Activated CD4-positive, alpha-beta T cell treated with anti-CD3 and anti-CD28 coated beads, Interleukin-2, amount 10 ng/mL, durations not matched to agents 24 days and 14 days (primary cell): ENCODE measurements at regions of chr13 and their contacts with region 1.

Region 1: DNA sequence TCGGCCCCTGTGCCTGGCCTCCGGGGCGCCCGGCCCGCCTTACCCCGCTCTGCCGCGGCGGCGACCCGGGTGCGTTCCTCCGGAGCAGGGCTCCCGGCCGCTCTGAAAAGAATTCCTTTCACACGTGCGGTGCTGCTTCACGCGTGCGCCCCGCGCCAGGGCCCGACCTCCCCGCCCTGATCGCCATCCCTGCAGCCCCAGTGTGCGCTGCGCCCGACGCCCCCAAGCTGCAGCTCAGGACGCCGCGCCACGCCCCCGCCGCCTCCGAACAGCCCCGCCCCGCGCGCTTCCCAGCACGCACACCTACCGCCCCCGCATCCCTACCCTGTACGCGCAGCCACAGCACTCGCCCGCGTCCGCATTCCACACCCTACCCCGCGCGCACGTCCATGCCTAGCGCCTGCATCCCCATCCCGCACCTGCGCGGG is at the start of gene GJA3:
- DNase-seq: peak; percentile 86
- H3K4me3 Mint-ChIP-seq: peak within 1 kb of the TSS; percentile 86
- H3K27ac Mint-ChIP-seq: peak within 1 kb of the TSS; percentile 79
- H3K4me1 Mint-ChIP-seq: peaks cover 18% of the 10 kb centered on the region
- H3K27me3 Mint-ChIP-seq: peaks cover 56% of the 10 kb centered on the region
- total RNA-seq, gene GJA3: 0.02 TPM in 1 of 2 replicates, not detected in the other

Region 2: GRCh38 chr13:19782049-19782726 is 378.7 kb before region 1 on chr13:
- intact Hi-C with region 1: loop called (anchors 1 kb)
- DNase-seq: peak; percentile 91
- H3K4me3 Mint-ChIP-seq: peak overlapping the region; percentile 96
- H3K27ac Mint-ChIP-seq: peak overlapping the region; percentile 99
- H3K4me1 Mint-ChIP-seq: peaks cover 6% of the 10 kb centered on the region
- H3K27me3 Mint-ChIP-seq: peaks cover 2% of the 10 kb centered on the region

Region 3: DNA sequence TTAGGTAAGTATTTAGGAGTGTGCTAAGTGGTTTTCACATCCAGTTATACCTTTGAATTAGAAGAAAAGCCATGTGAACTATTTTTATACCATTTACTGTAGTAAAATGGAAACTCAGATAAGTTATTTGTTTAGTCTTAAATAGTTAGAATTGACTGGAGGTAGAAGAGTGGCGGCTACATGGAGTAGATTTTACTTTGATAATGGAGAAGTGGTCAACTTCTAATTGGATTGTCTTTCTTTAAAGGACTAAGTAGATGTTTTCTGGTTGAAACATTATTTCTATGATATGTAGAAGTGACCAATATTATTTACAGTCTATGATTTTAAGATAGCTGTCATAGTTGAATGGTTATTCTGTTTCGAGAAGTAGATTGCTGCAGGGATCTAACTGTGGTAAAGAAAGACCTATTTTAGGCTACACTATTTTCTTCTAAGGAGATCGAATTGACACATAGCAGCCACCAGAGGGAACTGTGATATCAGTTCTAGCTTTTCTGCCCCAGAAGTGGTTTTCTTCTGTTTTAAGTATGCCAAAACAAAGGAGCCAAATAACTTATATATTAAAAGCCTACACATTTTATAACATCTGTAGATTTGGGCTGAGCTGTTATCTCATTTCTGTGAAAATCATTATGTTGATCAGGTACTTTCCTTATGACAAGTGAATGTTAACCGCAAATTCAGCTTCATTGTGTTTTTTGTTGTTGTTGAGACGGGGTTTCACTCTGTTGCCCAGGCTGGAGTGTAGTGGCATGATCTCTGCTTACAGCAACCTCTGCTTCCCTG is 176.2 kb before region 1 on chr13:
- intact Hi-C with region 1: loop called (anchors 1 kb)
- DNase-seq: no peak
- H3K4me3 Mint-ChIP-seq: no peak overlapping the region
- H3K27ac Mint-ChIP-seq: no peak overlapping the region
- H3K4me1 Mint-ChIP-seq: peaks cover 21% of the 10 kb centered on the region
- H3K27me3 Mint-ChIP-seq: no peaks in the 10 kb centered on the region

Region 4: GRCh38 chr13:20090349-20090748 is 70.5 kb before region 1 on chr13:
- intact Hi-C with region 1: loop called (anchors 5 kb)
- DNase-seq: no peak
- H3K4me3 Mint-ChIP-seq: no peak overlapping the region
- H3K27ac Mint-ChIP-seq: no peak overlapping the region
- H3K4me1 Mint-ChIP-seq: no peaks in the 10 kb centered on the region
- H3K27me3 Mint-ChIP-seq: peaks cover 3% of the 10 kb centered on the region

Region 5: GRCh38 chr13:20101484-20102316 is 59.2 kb before region 1 on chr13:
- intact Hi-C with region 1: no loop called
- DNase-seq: peak; percentile 50
- H3K4me3 Mint-ChIP-seq: no peak overlapping the region
- H3K27ac Mint-ChIP-seq: no peak overlapping the region
- H3K4me1 Mint-ChIP-seq: no peaks in the 10 kb centered on the region
- H3K27me3 Mint-ChIP-seq: peaks cover 59% of the 10 kb centered on the region

Region 6: DNA sequence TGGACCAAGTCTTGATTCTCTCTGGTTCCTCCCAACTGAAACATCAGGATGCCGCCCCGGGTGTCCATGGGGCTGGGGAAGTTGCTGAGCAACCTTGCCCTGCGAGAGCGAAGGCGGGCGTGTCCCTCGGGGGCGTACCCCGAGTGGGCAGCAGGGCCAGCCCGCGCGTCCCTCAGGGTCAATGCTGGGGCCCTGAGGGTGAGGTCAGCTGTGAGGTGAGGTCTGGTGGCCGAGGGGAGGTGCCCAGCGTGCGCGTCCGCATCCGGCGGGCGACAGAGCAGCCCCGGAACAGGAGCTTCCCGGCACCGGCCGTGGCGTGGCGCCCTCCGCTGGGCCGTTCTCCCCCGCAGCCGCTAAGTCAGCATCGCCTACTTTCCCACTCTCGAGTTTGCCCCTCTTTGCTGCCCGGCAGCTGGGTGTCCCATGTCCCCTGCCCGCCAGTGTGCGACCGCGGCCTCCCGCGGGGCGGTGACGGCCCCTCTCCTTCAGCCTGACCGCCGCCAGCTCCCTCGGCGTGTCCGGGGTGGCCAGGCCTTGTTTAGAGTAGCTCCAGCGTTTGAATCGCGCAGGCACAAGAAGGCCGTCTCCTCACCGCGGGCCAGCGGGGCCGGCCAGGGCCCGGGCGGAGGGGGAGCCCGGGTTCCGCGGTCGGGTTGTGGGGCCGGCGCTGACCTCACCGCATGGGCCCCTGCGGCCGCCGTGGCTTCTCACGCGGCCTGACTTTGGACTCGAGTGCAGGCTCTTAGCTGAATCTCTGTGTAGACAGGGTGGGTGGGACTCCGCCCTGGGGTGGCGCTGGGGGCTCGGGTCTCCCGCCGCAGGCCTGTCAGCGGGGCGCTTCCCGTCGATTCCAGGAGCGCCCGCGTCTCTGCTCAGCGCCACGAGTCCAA is 33.0 kb before region 1 on chr13:
- intact Hi-C with region 1: loop called (anchors 2 kb)
- DNase-seq: peak; percentile 81
- H3K4me3 Mint-ChIP-seq: peak overlapping the region; percentile 60
- H3K27ac Mint-ChIP-seq: no peak overlapping the region
- H3K4me1 Mint-ChIP-seq: peaks cover 2% of the 10 kb centered on the region
- H3K27me3 Mint-ChIP-seq: peaks cover 35% of the 10 kb centered on the region

Region 7: DNA sequence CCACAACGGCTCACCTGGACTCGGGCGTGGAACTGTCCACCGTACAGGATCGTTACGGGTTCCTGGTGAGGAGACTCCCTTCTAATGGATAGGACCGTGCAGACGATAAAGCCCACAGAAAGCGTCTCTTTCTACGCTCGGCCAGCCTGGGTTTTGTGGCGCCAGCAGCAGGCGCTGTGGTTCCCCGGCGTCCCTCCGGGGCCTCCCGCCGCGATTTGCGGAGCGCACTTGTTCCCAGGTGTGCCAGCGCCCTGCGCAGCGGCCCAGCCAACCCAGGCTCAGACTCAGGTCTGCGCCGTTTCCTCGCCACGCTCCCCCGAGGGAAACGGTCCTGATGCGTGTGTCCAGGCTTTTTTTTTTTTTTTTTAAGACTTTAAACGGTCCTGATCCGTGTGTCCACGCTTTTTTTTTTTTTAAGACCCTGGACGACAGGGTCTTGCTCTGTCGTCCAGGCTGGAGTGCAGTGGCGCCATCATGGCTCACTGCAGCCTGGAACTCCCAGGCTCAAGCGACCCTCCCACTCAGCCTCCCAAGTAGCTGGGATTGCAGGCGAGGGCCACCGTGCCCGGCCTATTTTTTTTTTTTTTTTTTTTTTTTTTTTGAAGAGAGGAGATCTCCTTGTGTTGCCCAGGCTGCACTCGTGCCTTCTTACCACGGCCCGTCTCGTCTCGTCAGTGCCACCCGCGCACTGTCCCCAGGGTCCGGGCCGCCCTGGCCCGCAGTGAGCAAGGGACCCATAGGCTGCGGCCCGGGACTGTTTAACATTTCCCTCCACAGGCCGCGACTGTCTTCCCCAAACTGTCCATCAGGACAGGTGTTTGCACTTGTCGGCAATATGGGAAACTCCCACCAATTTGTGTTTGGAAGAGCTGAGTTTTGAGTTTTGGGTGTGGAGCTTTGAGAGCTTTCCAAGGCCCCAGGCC is 23.8 kb before region 1 on chr13:
- intact Hi-C with region 1: loop called (anchors 2 kb)
- DNase-seq: peak; percentile 81
- H3K4me3 Mint-ChIP-seq: peak overlapping the region; percentile 23
- H3K27ac Mint-ChIP-seq: no peak overlapping the region
- H3K4me1 Mint-ChIP-seq: peaks cover 3% of the 10 kb centered on the region
- H3K27me3 Mint-ChIP-seq: peaks cover 55% of the 10 kb centered on the region

Region 8: GRCh38 chr13:20860844-20861243 is 700.0 kb after region 1 on chr13:
- intact Hi-C with region 1: no loop called
- DNase-seq: no peak
- H3K4me3 Mint-ChIP-seq: no peak overlapping the region
- H3K27ac Mint-ChIP-seq: no peak overlapping the region
- H3K4me1 Mint-ChIP-seq: peaks cover 4% of the 10 kb centered on the region
- H3K27me3 Mint-ChIP-seq: no peaks in the 10 kb centered on the region